ENCODE measurements at regions of chr4 and their contacts with region 1.

Region 1: GRCh38 chr4:138242076-138242833 is at the start of gene SLC7A11:
- DNase-seq: peak; percentile 96
- H3K4me3 ChIP-seq: peak within 1 kb of the TSS; percentile 48 to 99 (median 96)
- H3K27ac ChIP-seq: peak within 1 kb of the TSS; percentile 96
- H3K4me1 ChIP-seq: peaks cover 20% of the 10 kb centered on the region
- H3K27me3 ChIP-seq: no peaks in the 10 kb centered on the region
- CTCF ChIP-seq: no peak
- POLR2A ChIP-seq: peak; percentile 87
- total RNA-seq, gene SLC7A11: 79.3 and 82.7 TPM in 2 replicates

Region 2: GRCh38 chr4:138035781-138036258 is 206.4 kb before region 1 on chr4:
- CTCF ChIA-PET with region 1: interaction called, 5 read pairs
- POLR2A ChIA-PET with region 1: no interaction called
- dilution Hi-C with region 1: no loop called
- intact Hi-C with region 1: loop called (anchors 2 kb)
- DNase-seq: peak; percentile 80
- H3K4me3 ChIP-seq: no peak overlapping the region
- H3K27ac ChIP-seq: peak overlapping the region; percentile 76
- H3K4me1 ChIP-seq: peaks cover 35% of the 10 kb centered on the region
- H3K27me3 ChIP-seq: no peaks in the 10 kb centered on the region
- CTCF ChIP-seq: peak; percentile 36 to 68
- POLR2A ChIP-seq: no peak

Region 3: DNA sequence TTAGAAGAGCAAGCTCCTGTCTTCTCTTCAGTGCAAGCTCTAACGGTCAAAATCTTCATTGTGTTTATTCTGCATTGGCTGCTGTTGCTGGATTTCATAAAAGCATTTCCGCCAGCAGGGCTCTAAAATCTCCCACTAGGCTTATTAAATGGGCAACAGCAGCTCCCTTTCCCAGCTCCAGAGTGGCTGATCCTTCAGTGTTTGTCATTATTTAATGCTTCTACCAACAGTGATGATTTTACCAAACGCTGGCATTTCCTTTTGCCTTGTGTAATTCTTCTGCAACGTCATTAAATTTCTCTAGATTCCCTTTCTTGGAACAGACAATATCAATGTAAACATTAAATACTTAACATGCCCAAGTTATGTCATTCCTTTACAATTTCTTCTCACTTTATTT is 20.2 kb before region 1 on chr4:
- CTCF ChIA-PET with region 1: interaction called, 3 read pairs
- POLR2A ChIA-PET with region 1: interaction called, 7 read pairs
- dilution Hi-C with region 1: no loop called
- intact Hi-C with region 1: loop called (anchors 1 kb)
- DNase-seq: peak; percentile 79
- H3K4me3 ChIP-seq: no peak overlapping the region
- H3K27ac ChIP-seq: peak overlapping the region; percentile 67
- H3K4me1 ChIP-seq: peaks cover 56% of the 10 kb centered on the region
- H3K27me3 ChIP-seq: no peaks in the 10 kb centered on the region
- CTCF ChIP-seq: peak in 1 of 2 donors; percentile 10
- POLR2A ChIP-seq: peak; percentile 31

Region 4: GRCh38 chr4:138275764-138276621 is 33.7 kb after region 1 on chr4:
- CTCF ChIA-PET with region 1: no interaction called
- POLR2A ChIA-PET with region 1: no interaction called
- dilution Hi-C with region 1: no loop called
- intact Hi-C with region 1: loop called (anchors 1 kb)
- DNase-seq: peak; percentile 83
- H3K4me3 ChIP-seq: no peak overlapping the region
- H3K27ac ChIP-seq: peak overlapping the region; percentile 66
- H3K4me1 ChIP-seq: peaks cover 17% of the 10 kb centered on the region
- H3K27me3 ChIP-seq: no peaks in the 10 kb centered on the region
- CTCF ChIP-seq: no peak
- POLR2A ChIP-seq: no peak

Region 5: DNA sequence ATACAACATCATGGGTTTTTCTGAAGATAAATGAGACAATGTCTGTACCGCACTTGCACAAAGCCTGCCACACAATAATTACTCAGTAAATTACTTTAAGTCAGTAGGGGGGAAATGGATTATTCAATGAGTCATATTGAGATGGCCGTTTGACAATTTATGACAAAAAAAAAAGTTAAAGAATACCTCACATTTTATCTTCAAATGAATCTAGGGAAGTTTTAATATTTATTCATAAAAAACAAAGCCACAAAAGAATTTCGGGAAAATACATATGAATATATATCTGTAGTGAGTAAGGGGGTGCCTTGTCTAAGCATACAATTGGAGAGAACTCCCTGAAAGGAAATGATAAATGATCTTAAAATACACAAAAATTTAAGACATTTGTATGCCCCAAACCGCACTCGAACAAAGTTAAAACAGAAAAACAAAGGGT is 196.9 kb after region 1 on chr4:
- CTCF ChIA-PET with region 1: no interaction called
- POLR2A ChIA-PET with region 1: no interaction called
- dilution Hi-C with region 1: no loop called
- intact Hi-C with region 1: loop called (anchors 1 kb)
- DNase-seq: peak; percentile 60
- H3K4me3 ChIP-seq: peak overlapping the region in 1 of 3 experiments; percentile 17
- H3K27ac ChIP-seq: peak overlapping the region; percentile 70
- H3K4me1 ChIP-seq: peaks cover 19% of the 10 kb centered on the region
- H3K27me3 ChIP-seq: no peaks in the 10 kb centered on the region
- CTCF ChIP-seq: no peak
- POLR2A ChIP-seq: no peak

Region 6: GRCh38 chr4:138522366-138522765 is 280.1 kb after region 1 on chr4:
- CTCF ChIA-PET with region 1: interaction called, 14 read pairs
- POLR2A ChIA-PET with region 1: interaction called, 5 read pairs
- dilution Hi-C with region 1: no loop called
- intact Hi-C with region 1: loop called (anchors 1 kb)
- DNase-seq: peak; percentile 21
- H3K4me3 ChIP-seq: no peak overlapping the region
- H3K27ac ChIP-seq: no peak overlapping the region
- H3K4me1 ChIP-seq: no peaks in the 10 kb centered on the region
- H3K27me3 ChIP-seq: no peaks in the 10 kb centered on the region
- CTCF ChIP-seq: peak; percentile 27 to 40
- POLR2A ChIP-seq: no peak

Region 7: GRCh38 chr4:138680989-138681604 is 438.8 kb after region 1 on chr4:
- CTCF ChIA-PET with region 1: interaction called, 3 read pairs
- POLR2A ChIA-PET with region 1: no interaction called
- dilution Hi-C with region 1: no loop called
- intact Hi-C with region 1: loop called (anchors 5 kb)
- DNase-seq: peak; percentile 58
- H3K4me3 ChIP-seq: no peak overlapping the region
- H3K27ac ChIP-seq: no peak overlapping the region
- H3K4me1 ChIP-seq: no peaks in the 10 kb centered on the region
- H3K27me3 ChIP-seq: peaks cover 24 to 48% of the 10 kb centered on the region in 2 experiments
- CTCF ChIP-seq: peak; percentile 72 to 76
- POLR2A ChIP-seq: no peak

Measured in endothelial cell of umbilical vein (primary cell).